ENCODE measurements at regions of chr18 and their contacts with region 1.

Region 1: GRCh38 chr18:25832001-25832604 is 258.3 kb downstream of the SS18 start:
- H3K4me3 ChIP-seq: no peak overlapping the region
- H3K27ac ChIP-seq: no peak overlapping the region
- H3K4me1 ChIP-seq: peaks cover 3% of the 10 kb centered on the region; the same call in 1 of the 2 replicates
- CTCF ChIP-seq: peak; percentile 48; the same call in 1 of the 2 replicates

Region 2: GRCh38 chr18:25843791-25844190 is 11.7 kb after region 1 on chr18:
- CTCF ChIA-PET with region 1: interaction called, 10 read pairs
- POLR2A ChIA-PET with region 1: no interaction called
- H3K4me3 ChIP-seq: no peak overlapping the region
- H3K27ac ChIP-seq: no peak overlapping the region
- H3K4me1 ChIP-seq: no peaks in the 10 kb centered on the region
- CTCF ChIP-seq: no peak

Measured in HEK293 (cell line).